Activated CD8-positive, alpha-beta T cell treated with anti-CD3 and anti-CD28 coated beads for 36 hours (primary cell): ENCODE measurements at regions of chr19 and their contacts with region 1.

Region 1: GRCh38 chr19:46265217-46265828 is 31.5 kb upstream of the HIF3A start:
- DNase-seq: peak; percentile 84
- ATAC-seq: peak; percentile 67
- H3K4me3 Mint-ChIP-seq: no peak overlapping the region
- H3K27ac Mint-ChIP-seq: no peak overlapping the region
- H3K4me1 Mint-ChIP-seq: peaks cover 14% of the 10 kb centered on the region
- H3K27me3 Mint-ChIP-seq: peaks cover 50% of the 10 kb centered on the region
- CTCF ChIP-seq: peak; percentile 94

Region 2: DNA sequence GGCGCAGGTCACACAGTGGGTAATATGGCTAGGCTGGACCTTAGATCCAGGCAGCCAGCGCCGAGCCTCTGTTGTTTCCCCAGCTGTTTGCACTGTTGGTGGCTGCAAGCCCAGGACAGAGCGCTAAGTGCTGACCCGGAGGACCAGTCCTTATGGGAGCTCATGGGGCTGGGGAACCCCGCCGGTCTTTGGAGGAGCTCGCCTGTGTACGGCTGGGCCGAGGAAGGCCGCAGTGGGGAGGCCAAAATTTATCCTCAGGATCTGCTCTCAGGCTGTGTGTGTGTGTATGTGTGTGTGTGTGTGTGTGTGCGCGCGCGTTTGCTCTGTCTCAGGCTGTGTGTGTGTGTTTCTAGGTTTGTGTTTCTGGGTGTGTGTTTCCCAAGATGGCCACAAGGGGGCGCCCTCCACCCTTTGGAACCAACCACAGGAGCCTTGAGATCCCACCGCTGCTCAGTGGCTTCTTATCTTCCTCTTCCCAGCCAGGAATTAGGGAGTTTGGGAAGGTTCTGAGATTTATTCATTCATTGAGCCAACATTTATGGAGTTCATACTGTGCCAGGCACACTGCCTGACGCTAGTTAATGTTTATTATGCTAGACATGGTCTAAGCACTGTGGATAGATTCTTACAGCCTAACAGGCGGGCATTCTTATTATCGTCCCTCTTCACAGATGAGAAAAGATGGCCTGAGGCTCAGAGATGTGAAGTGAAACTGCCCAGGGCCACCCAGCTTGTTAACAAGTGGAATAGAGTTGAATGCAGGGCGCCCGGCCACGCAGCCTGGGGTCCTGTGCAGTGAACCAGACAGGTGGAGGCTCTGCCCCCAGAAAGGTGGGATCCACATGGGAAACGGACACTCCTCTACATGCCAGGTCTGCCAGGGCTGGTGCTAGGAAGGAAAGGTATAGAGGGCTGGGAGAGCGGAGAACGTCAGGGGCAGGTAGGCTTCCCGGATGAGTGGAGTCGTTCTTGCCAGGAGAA is 255.5 kb before region 1 on chr19:
- CTCF ChIA-PET with region 1: interaction called, 11 read pairs
- POLR2A ChIA-PET with region 1: no interaction called
- intact Hi-C with region 1: no loop called
- DNase-seq: peak; percentile 82
- ATAC-seq: peak; percentile 94
- H3K4me3 Mint-ChIP-seq: no peak overlapping the region
- H3K27ac Mint-ChIP-seq: no peak overlapping the region
- H3K4me1 Mint-ChIP-seq: peaks cover 5% of the 10 kb centered on the region
- H3K27me3 Mint-ChIP-seq: peaks cover 6% of the 10 kb centered on the region
- CTCF ChIP-seq: peak; percentile 80

Region 3: DNA sequence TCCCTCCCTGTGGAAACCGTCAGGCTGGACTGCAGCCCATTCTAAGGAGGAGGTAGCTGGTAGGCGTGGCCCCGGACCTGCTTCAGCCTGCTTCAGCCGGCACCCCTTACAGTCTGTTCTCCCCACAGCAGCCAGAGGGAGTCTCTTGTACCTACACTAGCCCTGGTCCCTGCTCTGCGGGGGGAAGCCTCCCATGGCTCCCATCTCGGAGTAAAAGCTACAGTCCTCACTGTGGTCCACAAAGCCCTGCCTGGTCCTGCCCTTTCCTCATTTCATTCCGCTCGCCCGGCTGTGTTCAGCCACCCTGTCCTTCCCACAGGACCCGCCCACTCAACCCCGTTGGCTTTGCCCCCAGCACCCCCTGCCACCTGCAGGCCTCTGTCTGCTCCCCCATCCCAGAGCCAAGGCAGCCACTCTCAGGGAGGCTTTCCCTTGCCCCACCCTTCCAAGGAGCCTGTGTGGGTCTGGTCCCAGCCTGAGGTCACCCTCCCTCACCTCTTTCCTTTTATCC is 243.7 kb before region 1 on chr19:
- CTCF ChIA-PET with region 1: interaction called, 56 read pairs
- POLR2A ChIA-PET with region 1: no interaction called
- intact Hi-C with region 1: loop called (anchors 5 kb)
- DNase-seq: no peak
- ATAC-seq: no peak
- H3K4me3 Mint-ChIP-seq: no peak overlapping the region
- H3K27ac Mint-ChIP-seq: no peak overlapping the region
- H3K4me1 Mint-ChIP-seq: peaks cover 12% of the 10 kb centered on the region
- H3K27me3 Mint-ChIP-seq: peaks cover 13% of the 10 kb centered on the region
- CTCF ChIP-seq: no peak

Region 4: DNA sequence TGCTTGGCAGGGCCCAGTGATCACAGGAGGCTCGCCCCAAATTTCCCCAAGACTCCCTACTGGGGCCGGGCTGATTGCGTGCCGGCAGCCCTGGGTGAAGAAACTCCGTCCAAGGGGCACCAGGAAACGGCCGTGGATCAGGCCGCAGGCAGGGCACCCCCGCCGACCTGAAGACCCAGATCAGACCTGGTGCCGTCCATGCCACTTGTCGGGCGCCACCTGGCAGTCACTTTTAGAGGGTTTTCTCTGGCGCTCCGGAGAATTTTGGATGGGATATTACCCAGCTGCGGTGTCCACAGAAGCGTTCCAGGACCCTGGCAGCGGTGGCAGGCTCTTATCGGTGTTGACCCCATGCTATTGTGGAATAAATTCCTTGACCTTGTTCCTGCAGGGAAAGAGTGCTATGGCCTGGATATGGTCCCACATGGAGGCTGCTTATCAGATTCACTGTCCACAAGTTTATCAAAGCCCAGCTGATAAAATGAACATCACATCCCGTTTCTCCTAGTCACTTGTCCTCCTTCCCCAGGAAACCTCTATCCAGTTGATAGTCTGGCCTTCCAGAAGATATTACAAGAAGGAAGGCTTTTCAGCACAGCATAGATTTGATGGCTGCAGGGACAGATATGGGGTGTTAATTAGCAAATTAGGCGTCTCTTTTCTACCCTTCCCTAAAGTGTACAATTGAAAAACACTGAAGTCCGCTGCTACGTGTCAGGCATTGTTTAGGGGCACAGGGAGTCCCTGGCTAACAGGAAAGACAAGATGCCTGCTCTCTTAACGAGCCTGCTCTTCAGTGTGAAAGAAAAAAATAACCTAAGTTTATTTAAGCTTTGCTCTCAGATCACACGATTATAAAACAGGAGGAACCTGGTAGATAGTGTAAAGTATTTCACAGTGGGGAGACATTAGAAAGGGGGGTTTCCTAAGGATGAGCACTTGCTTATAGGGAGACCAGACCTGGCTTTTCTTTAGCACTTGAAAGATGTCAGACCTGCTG is 78.9 kb before region 1 on chr19:
- CTCF ChIA-PET with region 1: interaction called, 12 read pairs
- POLR2A ChIA-PET with region 1: no interaction called
- intact Hi-C with region 1: loop called (anchors 5 kb)
- DNase-seq: no peak
- ATAC-seq: no peak
- H3K4me3 Mint-ChIP-seq: no peak overlapping the region
- H3K27ac Mint-ChIP-seq: no peak overlapping the region
- H3K4me1 Mint-ChIP-seq: peaks cover 19% of the 10 kb centered on the region
- H3K27me3 Mint-ChIP-seq: peaks cover 60% of the 10 kb centered on the region
- CTCF ChIP-seq: no peak

Region 5: DNA sequence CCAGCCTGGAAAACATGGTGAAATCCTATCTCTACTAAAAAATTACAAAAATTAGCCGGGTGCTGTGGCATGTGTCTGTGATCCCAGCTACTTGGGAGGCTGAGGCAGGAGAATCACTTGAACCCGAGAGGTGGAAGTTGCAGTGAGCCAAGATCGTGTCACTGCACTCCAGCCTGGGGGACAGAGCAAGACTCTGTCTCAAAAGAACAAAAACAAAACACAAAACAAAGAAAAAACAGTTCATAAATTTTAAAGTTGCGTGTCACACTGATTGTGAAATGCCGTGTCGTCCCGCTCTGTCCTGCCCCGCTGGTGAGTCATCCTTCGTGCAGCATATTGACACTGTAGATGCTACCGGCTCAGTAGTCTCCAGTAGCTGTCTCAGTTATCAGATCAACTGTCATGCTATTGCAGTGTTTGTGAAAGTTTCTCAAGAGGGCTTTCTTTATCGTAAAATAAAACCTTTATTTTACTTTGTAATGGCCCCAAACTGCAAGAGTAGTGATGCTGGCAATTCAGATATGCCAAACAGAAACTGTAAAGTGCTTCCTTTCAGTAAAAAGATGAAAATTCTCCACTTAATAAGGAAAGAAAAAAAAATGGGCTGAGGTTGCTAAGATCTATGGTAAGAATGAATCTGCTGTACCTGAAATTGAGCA is 72.2 kb before region 1 on chr19:
- CTCF ChIA-PET with region 1: interaction called, 12 read pairs
- POLR2A ChIA-PET with region 1: no interaction called
- intact Hi-C with region 1: loop called (anchors 5 kb)
- DNase-seq: no peak
- ATAC-seq: no peak
- H3K4me3 Mint-ChIP-seq: no peak overlapping the region
- H3K27ac Mint-ChIP-seq: no peak overlapping the region
- H3K4me1 Mint-ChIP-seq: no peaks in the 10 kb centered on the region
- H3K27me3 Mint-ChIP-seq: peaks cover 47% of the 10 kb centered on the region
- CTCF ChIP-seq: no peak

Region 6: GRCh38 chr19:46279177-46279576 is 13.9 kb after region 1 on chr19:
- CTCF ChIA-PET with region 1: interaction called, 18 read pairs
- POLR2A ChIA-PET with region 1: no interaction called
- intact Hi-C with region 1: no loop called
- DNase-seq: no peak
- ATAC-seq: no peak
- H3K4me3 Mint-ChIP-seq: no peak overlapping the region
- H3K27ac Mint-ChIP-seq: no peak overlapping the region
- H3K4me1 Mint-ChIP-seq: no peaks in the 10 kb centered on the region
- H3K27me3 Mint-ChIP-seq: peaks cover 24% of the 10 kb centered on the region
- CTCF ChIP-seq: no peak